Panc1 (cell line): ENCODE measurements at regions of chr20 and their contacts with region 1.

Region 1: DNA sequence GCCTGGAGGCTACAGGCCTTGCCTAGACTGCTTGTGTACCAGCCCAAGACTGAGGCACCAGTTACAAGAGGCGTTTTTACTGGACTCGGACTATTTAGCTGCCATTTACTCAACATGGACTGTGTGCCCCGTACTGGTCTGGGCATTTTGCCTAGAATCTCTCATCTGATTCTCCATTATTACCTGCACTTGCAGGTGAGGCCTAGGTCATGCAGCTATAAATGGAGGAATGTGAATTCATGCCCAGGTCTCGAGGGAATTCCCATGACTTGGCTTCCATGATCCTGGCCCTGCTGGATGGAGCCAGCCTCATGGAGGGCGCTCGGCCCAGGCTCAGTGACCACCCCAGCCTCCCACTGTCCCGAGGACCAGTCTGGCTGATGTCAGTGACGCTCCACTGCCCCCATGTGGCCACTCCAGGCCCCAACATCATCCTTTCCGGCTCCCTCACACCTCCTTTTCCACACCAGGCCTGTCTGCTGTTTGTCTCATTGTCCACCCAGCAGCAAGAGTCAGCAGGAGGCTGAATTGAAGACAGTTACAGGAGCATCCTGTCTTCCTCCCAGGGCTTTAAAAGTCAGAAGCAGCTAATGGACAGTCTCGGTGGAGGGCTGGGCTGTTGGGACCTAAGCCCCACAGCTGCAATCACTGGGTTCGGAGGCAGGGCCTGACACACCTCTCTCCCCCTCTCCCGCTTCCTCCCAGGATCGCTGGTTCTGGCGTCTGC is 8.7 kb downstream of the MMP24OS start:
- DNase-seq: no peak
- ATAC-seq: peak; percentile 81
- H3K4me3 ChIP-seq: no peak overlapping the region
- H3K27ac ChIP-seq: no peak overlapping the region
- H3K4me1 ChIP-seq: no peaks in the 10 kb centered on the region
- H3K27me3 ChIP-seq: no peaks in the 10 kb centered on the region
- CTCF ChIP-seq: peak; percentile 93

Region 2: GRCh38 chr20:34834459-34834893 is 434.7 kb before region 1 on chr20:
- CTCF ChIA-PET with region 1: no interaction called
- POLR2A ChIA-PET with region 1: no interaction called
- in situ Hi-C with region 1: no loop called
- intact Hi-C with region 1: loop called (anchors 5 kb)
- DNase-seq: peak; percentile 22
- ATAC-seq: peak; percentile 79
- H3K4me3 ChIP-seq: no peak overlapping the region; a peak in 1 of 4 replicates
- H3K27ac ChIP-seq: no peak overlapping the region
- H3K4me1 ChIP-seq: no peaks in the 10 kb centered on the region
- H3K27me3 ChIP-seq: no peaks in the 10 kb centered on the region
- CTCF ChIP-seq: peak; percentile 63

Region 3: GRCh38 chr20:35085477-35086225 is 183.6 kb before region 1 on chr20:
- CTCF ChIA-PET with region 1: no interaction called
- POLR2A ChIA-PET with region 1: interaction called, 13 read pairs
- in situ Hi-C with region 1: no loop called
- intact Hi-C with region 1: no loop called
- DNase-seq: no peak
- ATAC-seq: no peak
- H3K4me3 ChIP-seq: no peak overlapping the region
- H3K27ac ChIP-seq: no peak overlapping the region
- H3K4me1 ChIP-seq: peaks cover 10% of the 10 kb centered on the region; the same call in 1 of the 2 replicates
- H3K27me3 ChIP-seq: no peaks in the 10 kb centered on the region
- CTCF ChIP-seq: no peak

Region 4: DNA sequence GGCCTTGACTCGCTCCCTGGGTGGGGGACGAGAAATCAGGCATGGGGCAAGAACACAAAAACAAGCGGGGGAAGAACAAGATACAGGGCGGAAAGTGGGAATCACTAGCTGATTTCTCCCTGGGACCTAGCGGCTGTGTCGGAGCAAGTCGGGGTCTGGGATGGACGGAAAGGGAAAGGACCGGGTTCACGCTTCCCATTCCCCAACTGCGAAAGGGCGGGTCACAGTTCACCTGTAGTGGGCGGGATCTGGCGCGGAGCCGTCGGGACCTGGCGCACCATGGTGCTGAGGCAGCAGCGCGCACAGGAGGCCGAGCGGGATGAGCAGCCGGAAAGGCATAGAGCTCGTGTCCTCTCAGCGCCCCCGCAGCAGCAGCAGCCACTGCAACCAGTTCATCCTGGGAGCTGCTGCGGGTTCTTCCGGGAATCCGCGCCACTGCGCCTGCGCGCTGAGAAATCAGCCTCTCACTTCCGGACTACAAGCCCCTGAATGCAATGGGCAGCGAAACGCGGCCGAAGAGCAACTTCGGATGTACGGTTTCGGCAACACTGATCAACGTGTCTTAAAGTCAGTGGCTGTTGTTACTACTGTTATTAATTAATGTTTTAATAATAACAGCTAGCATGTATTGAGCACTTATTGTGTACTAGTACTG is 122.2 kb before region 1 on chr20 and contains the start of gene EDEM2:
- CTCF ChIA-PET with region 1: interaction called, 5 read pairs
- POLR2A ChIA-PET with region 1: no interaction called
- in situ Hi-C with region 1: no loop called
- intact Hi-C with region 1: loop called (anchors 5 kb)
- DNase-seq: peak; percentile 82
- ATAC-seq: peak; percentile 96
- H3K4me3 ChIP-seq: peak within 1 kb of the TSS; percentile 92 to 96
- H3K27ac ChIP-seq: peak within 1 kb of the TSS; percentile 90
- H3K4me1 ChIP-seq: peaks cover 2% of the 10 kb centered on the region; the same call in 1 of the 2 replicates
- H3K27me3 ChIP-seq: no peaks in the 10 kb centered on the region
- CTCF ChIP-seq: no peak
- total RNA-seq, gene EDEM2: 34.7 TPM

Region 5: GRCh38 chr20:35215066-35215956 is 53.9 kb before region 1 on chr20:
- CTCF ChIA-PET with region 1: no interaction called
- POLR2A ChIA-PET with region 1: no interaction called
- in situ Hi-C with region 1: no loop called
- intact Hi-C with region 1: loop called (anchors 10 kb)
- DNase-seq: no peak
- ATAC-seq: no peak; the same call in 1 of the 2 replicates
- H3K4me3 ChIP-seq: no peak overlapping the region
- H3K27ac ChIP-seq: no peak overlapping the region
- H3K4me1 ChIP-seq: no peaks in the 10 kb centered on the region
- H3K27me3 ChIP-seq: no peaks in the 10 kb centered on the region
- CTCF ChIP-seq: no peak

Region 6: DNA sequence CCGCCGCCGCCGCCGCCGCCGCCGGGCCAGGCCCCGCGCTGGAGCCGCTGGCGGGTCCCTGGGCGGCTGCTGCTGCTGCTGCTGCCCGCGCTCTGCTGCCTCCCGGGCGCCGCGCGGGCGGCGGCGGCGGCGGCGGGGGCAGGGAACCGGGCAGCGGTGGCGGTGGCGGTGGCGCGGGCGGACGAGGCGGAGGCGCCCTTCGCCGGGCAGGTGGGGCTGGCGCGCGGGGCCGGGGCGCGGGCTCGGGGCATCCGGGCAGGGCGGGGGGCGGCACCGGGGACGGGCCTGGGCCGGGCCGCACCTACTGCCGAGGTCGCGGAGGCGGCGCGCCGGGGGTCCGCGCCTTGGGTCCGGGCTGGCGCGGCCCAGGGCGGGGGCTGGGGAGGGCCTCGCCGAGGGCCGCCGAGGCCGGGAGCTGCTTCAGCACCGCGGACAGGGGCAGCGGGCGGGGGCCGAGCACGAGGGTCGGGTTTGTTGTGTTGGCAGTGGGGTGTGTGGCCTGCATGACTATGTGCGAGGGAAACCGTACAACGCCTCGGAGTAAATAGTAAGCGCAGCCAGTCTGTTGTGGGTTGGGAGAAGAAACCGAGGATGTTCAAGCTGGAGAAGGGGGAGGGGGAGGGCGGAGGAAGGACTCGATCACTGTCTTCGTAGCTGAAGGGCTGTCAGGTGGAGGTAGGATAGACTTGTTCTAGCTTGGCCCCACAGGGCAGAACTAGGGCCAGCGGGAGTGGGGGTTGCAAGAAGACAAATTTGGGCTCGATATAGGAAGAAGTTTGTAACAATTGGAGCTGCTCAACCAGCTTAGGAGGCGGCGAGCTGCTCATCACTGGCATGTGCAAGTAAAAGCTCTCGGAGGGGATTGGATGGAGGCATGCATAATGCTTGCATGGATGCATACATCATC is 42.2 kb before region 1 on chr20:
- CTCF ChIA-PET with region 1: interaction called, 12 read pairs
- POLR2A ChIA-PET with region 1: no interaction called
- in situ Hi-C with region 1: no loop called
- intact Hi-C with region 1: no loop called
- DNase-seq: no peak
- ATAC-seq: peak; percentile 81
- H3K4me3 ChIP-seq: peak overlapping the region; percentile 16 to 45
- H3K27ac ChIP-seq: no peak overlapping the region
- H3K4me1 ChIP-seq: no peaks in the 10 kb centered on the region
- H3K27me3 ChIP-seq: peaks cover 17% of the 10 kb centered on the region
- CTCF ChIP-seq: no peak